HCT116 (cell line): ENCODE measurements at regions of chr1 and their contacts with region 1.

Region 1: GRCh38 chr1:151839457-151840405 is at the start of gene C2CD4D:
- DNase-seq: peak; percentile 27
- ATAC-seq: peak; percentile 73
- H3K4me3 ChIP-seq: peak within 1 kb of the TSS; percentile 31 to 51
- H3K27ac ChIP-seq: peak within 1 kb of the TSS; percentile 32; the same call in 1 of the 2 replicates
- H3K4me1 ChIP-seq: peaks cover 0 to 45% of the 10 kb centered on the region in 2 experiments; a peak in 2 of 4 replicates
- H3K27me3 ChIP-seq: no peaks in the 10 kb centered on the region
- CTCF ChIP-seq: no peak
- POLR2A ChIP-seq: no peak
- RAD21 ChIP-seq: no peak
- total RNA-seq, gene C2CD4D: 0.17 TPM

Region 2: DNA sequence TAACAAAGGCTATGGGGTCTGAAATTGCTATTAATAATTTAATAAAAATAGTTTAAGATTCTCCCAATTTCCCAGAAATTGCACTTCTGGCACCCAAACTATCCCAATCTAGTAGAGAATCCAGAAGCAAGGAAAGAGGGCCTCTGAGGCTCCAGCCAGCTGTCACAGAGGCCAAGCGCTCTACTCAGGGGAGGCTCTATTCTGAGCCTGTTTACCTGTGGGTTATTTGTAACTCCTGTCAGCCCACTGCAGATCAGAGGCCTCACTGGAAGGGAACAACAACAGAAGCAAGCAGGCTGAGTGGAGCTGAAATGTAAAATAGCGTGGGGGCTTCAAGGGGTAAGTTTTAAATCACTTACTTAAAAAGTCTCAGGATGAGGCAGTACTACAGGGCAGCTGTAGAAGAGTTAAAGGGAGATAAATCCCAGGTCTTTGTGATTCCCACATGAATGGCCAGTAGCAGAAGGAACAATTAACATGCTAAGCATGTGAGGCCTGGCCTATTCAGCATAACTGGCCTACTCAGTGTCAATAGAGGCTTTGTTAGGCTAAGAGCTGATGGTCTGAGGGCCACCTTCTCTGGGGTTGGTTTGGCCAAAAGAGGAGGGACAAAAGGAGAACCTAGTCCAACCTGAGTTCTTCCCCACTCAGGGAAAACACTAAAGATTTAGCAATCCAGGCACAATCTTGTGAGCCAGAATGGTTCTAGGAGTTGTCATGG is 544.8 kb before region 1 on chr1:
- CTCF ChIA-PET with region 1: no interaction called
- POLR2A ChIA-PET with region 1: no interaction called
- RAD21 ChIA-PET with region 1: no interaction called
- intact Hi-C with region 1: loop called (anchors 5 kb)
- DNase-seq: no peak
- ATAC-seq: no peak
- H3K4me3 ChIP-seq: no peak overlapping the region
- H3K27ac ChIP-seq: no peak overlapping the region
- H3K4me1 ChIP-seq: no peaks in the 10 kb centered on the region
- H3K27me3 ChIP-seq: no peaks in the 10 kb centered on the region
- CTCF ChIP-seq: no peak
- POLR2A ChIP-seq: no peak
- RAD21 ChIP-seq: no peak

Region 3: DNA sequence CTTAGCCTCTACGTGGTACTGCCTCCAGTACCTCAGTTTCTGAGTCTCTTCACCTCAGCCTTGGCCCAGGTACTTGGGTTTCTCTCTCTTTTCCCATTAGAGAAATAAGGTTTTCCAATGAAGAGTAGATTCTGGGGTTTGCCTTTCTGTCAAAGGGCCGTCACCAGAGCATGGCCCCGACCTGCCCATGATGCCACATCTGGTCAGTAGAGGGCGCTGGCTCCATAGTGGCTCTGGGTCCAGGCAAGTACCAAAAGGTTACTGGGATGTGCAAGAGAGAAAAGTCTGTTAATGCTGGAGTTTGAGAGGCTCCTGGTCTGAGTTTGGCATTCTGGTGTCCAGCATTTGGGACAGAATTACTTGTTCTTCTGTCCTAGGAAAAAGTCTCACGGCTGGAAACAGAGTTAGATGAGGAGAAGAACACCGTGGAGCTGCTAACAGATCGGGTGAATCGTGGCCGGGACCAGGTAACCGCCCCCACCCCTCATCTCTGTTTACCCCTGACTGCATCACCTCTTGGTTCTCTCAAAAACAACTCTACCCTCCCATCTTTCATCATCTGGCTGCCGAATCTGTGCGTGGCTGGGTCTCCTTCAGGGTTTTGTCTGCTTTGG is 305.0 kb before region 1 on chr1:
- CTCF ChIA-PET with region 1: interaction called, 8 read pairs
- POLR2A ChIA-PET with region 1: no interaction called
- RAD21 ChIA-PET with region 1: no interaction called
- intact Hi-C with region 1: loop called (anchors 1 kb)
- DNase-seq: no peak
- ATAC-seq: peak; percentile 74
- H3K4me3 ChIP-seq: no peak overlapping the region
- H3K27ac ChIP-seq: no peak overlapping the region
- H3K4me1 ChIP-seq: peaks cover 8 to 20% of the 10 kb centered on the region in 2 experiments
- H3K27me3 ChIP-seq: no peaks in the 10 kb centered on the region
- CTCF ChIP-seq: peak; percentile 85 to 99 (median 98)
- POLR2A ChIP-seq: no peak
- RAD21 ChIP-seq: peak; percentile 93

Region 4: GRCh38 chr1:151693076-151693651 is 146.6 kb before region 1 on chr1:
- CTCF ChIA-PET with region 1: interaction called, 4 read pairs
- POLR2A ChIA-PET with region 1: no interaction called
- RAD21 ChIA-PET with region 1: interaction called in 1 of 2 experiments, 4 read pairs
- intact Hi-C with region 1: loop called (anchors 1 kb)
- DNase-seq: peak; percentile 23
- ATAC-seq: peak; percentile 72
- H3K4me3 ChIP-seq: no peak overlapping the region
- H3K27ac ChIP-seq: no peak overlapping the region
- H3K4me1 ChIP-seq: no peaks in the 10 kb centered on the region
- H3K27me3 ChIP-seq: no peaks in the 10 kb centered on the region
- CTCF ChIP-seq: peak; percentile 64 to 74 (median 72); a peak in 5 of 6 replicates
- POLR2A ChIP-seq: no peak
- RAD21 ChIP-seq: peak; percentile 77